Mucosa of descending colon (tissue), 3 donors: ENCODE measurements at regions of chr12 and their contacts with region 1.

Region 1: GRCh38 chr12:108803428-108804105 is 53.8 kb downstream of the SSH1 start:
- DNase-seq: peak in 2 of 3 donors; percentile 48 to 90
- ATAC-seq: peak; percentile 95
- H3K4me3 ChIP-seq: no peak overlapping the region
- H3K4me1 ChIP-seq: peaks cover 2% of the 10 kb centered on the region
- CTCF ChIP-seq: peak; percentile 79

Region 2: GRCh38 chr12:108562348-108563135 is 241.0 kb before region 1 on chr12 and contains the start of gene ISCU:
- intact Hi-C with region 1: loop called in 1 of 2 experiments (anchors 10 kb)
- DNase-seq: peak; percentile 96 to 100 (median 99)
- ATAC-seq: peak; percentile 88
- H3K4me3 ChIP-seq: peak within 1 kb of the TSS; percentile 88
- H3K4me1 ChIP-seq: peaks cover 51% of the 10 kb centered on the region
- CTCF ChIP-seq: peak; percentile 11
- total RNA-seq, gene ISCU: 94.7 to 155 (median 107) TPM

Region 3: GRCh38 chr12:108664338-108665258 is 139.0 kb before region 1 on chr12:
- intact Hi-C with region 1: loop called (anchors 2 to 5 kb)
- DNase-seq: peak; percentile 66 to 94 (median 67)
- ATAC-seq: peak; percentile 98
- H3K4me3 ChIP-seq: no peak overlapping the region
- H3K4me1 ChIP-seq: peaks cover 3% of the 10 kb centered on the region
- CTCF ChIP-seq: peak; percentile 79

Region 4: DNA sequence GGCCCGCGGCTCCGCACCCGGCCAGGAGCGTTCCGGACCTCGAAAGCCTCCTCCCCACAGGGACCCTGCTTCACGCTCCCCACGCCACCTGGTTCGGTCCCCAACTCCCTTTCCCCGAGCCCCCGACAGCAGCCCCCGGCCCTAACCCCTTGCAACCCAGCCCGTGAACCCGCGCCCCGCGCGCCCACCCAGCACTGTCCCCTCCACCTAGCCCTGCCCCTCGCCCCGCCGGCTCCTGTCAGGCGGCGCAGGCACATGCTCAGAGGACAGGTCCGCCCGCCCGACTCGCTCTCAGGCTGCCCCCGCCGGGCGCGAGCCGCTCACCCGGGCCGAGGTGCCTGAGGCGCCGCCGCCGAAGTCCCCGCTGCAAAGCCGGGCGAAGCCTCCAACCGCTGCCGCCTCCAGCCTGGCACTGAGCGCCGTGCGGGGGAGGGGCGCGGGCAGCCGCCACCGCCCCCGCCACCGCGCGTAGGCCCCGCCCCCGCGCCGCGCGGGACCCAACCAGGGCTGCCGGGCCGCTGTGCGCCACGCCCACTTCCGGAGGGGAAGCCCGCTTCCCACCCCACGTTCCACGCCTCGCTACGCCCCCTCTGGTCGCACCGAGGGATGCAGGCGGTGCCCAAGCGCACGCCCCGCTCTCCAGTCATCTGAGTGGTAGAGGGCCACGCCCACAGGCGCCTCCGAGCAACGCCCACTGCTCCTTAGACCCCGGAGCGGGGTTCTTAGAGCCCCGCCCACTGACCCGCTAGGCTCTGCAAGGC is 72.3 kb before region 1 on chr12 and contains the start of gene CORO1C:
- intact Hi-C with region 1: loop called in 1 of 2 experiments (anchors 10 kb)
- DNase-seq: peak; percentile 97 to 100 (median 99)
- ATAC-seq: peak; percentile 84
- H3K4me3 ChIP-seq: peak within 1 kb of the TSS; percentile 73
- H3K4me1 ChIP-seq: peaks cover 34% of the 10 kb centered on the region
- CTCF ChIP-seq: peak; percentile 85
- total RNA-seq, gene CORO1C: 80.5 to 328 (median 123) TPM

Region 5: DNA sequence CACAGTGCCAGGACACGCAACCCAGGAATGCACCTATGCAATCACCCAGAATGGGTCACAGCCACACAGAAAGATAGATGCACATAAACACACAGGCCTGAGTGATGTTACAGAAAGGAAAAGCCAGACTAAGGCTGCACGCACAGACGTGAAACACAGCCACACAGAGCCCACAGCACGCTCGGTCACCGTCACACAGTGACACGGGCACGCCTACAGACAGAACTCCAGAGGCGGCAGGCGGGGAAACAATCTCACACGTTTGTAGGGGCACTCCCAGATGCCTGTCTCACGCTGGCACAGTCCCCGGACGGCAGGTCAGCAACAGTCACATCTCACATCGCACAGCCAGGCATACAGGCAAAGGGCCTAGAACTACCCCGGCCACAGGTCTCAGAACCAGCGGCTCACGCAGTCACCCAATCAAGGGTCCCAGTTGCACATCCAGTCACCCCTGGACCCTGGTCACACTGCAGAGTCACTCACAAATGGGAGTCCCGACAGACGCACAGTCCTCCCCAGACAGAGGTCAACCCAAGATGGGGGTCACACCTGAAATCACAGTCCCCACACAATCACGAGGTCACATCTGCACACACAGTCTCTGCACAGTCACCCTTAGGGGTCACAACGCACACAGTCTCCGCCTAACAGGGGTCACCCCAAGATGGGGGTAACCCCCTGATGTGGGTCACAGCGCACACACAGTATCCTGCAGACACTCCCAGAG is 53.0 kb after region 1 on chr12:
- intact Hi-C with region 1: loop called in 1 of 2 experiments (anchors 10 kb)
- DNase-seq: peak; percentile 79 to 87 (median 84)
- ATAC-seq: peak; percentile 62
- H3K4me3 ChIP-seq: peak overlapping the region; percentile 26
- H3K4me1 ChIP-seq: peaks cover 32% of the 10 kb centered on the region
- CTCF ChIP-seq: no peak